ENCODE measurements at regions of chr1 and their contacts with region 1.

Region 1: DNA sequence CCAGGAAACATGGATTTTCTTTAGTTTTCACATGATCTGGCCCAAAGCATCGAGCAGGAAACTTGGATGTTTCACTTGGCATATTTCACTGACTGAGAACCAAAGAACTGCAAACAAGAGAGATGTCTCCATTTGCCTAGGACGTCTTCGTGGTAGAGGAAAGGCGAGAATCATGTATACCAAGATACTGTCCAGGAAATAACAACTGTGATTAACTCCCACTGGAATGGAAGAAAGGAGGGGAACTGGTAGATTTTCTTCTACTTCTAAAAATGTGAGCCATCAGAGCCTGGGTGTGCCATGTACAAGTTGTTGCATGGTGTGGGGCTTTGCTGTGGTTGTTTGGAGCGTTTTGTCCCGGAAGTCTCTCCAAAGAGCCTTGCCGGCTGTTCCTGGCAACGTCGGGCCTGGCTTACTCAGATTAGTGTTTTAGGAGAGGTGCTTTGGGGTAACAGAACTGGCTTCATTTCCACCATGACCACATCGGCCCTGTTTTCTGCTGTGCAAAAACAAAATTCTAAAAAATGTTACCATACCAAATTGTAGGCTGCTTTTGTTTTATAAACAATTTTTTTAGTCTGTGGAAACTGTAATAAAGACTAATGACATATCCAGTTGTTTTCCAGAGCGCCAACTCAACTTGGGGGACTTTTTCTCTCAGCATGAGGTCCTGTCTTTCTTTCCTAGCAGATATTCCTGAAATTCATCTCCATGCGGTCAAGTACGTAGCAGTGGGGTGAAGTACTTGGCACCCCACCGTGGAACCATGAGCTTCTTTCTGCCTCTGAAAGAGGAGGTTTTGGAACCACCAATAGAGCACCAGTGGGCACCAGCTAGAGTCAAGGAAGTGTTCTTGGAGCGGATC is 118.3 kb downstream of the TM2D1 start:
- DNase-seq: peak; percentile 76 to 95
- H3K4me3 ChIP-seq: peak overlapping the region in 1 of 2 donors; percentile 51
- H3K27ac ChIP-seq: peak overlapping the region; percentile 91 to 94
- H3K4me1 ChIP-seq: peaks cover 4 to 19% of the 10 kb centered on the region in 2 donors
- H3K27me3 ChIP-seq: no peaks in the 10 kb centered on the region
- CTCF ChIP-seq: no peak

Region 2: DNA sequence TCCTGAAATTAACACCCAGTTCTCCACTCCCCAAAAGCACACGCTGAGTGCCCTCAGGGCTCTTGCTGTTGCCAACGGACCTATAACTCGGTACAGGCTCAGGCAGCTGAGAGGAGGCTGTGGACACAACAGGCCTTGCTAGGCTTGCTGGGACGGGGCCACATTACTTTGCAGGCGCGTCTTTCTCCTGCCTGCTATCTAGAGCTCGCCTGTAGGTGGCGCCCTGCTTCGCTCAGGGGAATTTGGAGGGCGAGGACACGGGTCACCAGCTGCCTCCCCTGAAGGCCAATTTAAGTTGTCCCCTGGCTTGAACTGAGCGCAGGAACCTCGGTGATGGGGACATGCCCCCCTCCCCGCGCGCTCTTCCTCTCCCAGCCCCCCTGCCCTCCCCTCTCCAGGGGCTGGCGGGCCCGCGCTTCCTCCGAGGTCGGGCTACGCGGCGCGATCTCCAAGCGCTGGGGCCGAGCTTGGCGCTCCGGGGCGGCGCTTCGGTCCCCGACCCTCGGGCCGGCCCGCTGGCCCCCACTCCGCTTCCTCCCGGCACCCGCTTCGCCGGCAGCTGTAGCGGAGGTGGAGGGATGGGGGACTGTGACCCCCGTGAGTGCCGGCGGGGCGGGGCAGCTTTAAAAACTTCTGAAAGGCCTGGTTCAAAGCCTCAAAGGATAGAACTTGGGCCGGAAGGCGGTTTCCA is 556.7 kb before region 1 on chr1:
- intact Hi-C with region 1: loop called (anchors 5 kb)
- DNase-seq: peak; percentile 66 to 97
- H3K4me3 ChIP-seq: peak overlapping the region; percentile 72 to 97
- H3K27ac ChIP-seq: peak overlapping the region; percentile 97 to 98
- H3K4me1 ChIP-seq: peaks cover 6 to 21% of the 10 kb centered on the region in 2 donors
- H3K27me3 ChIP-seq: no peaks in the 10 kb centered on the region
- CTCF ChIP-seq: peak; percentile 90 to 98 (median 97)

Region 3: GRCh38 chr1:61337981-61338848 is 268.5 kb before region 1 on chr1:
- intact Hi-C with region 1: loop called (anchors 10 kb)
- DNase-seq: peak; percentile 38 to 92
- H3K4me3 ChIP-seq: peak overlapping the region; percentile 27 to 54
- H3K27ac ChIP-seq: peak overlapping the region; percentile 86 to 88
- H3K4me1 ChIP-seq: peaks cover 3 to 45% of the 10 kb centered on the region in 2 donors
- H3K27me3 ChIP-seq: no peaks in the 10 kb centered on the region
- CTCF ChIP-seq: peak; percentile 71 to 80 (median 75)

Region 4: GRCh38 chr1:61472876-61473275 is 133.8 kb before region 1 on chr1:
- intact Hi-C with region 1: loop called (anchors 5 kb)
- DNase-seq: no peak
- H3K4me3 ChIP-seq: no peak overlapping the region
- H3K27ac ChIP-seq: no peak overlapping the region
- H3K4me1 ChIP-seq: peaks cover 0 to 9% of the 10 kb centered on the region in 2 donors
- H3K27me3 ChIP-seq: no peaks in the 10 kb centered on the region
- CTCF ChIP-seq: no peak

Region 5: DNA sequence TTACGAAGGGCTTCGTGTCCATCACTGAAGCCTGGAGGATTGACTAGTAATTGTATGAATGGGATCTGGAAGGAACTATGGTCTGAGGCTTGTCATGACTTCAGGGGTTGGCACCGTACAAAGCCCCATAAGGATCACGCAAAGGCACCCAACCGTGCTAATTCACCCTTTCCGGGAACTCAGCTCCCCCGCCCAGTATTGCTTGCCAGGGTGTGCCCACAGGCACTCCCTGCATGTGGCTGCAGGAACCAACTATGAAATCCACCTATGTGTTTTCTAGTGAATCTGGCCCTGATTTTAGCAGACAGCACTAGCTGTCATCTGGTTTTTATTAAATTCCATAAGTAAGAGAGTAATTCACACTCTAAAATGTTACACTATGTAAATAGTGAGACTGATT is 21.0 kb before region 1 on chr1:
- intact Hi-C with region 1: no loop called
- DNase-seq: no peak
- H3K4me3 ChIP-seq: no peak overlapping the region
- H3K27ac ChIP-seq: no peak overlapping the region
- H3K4me1 ChIP-seq: no peaks in the 10 kb centered on the region
- H3K27me3 ChIP-seq: no peaks in the 10 kb centered on the region
- CTCF ChIP-seq: no peak

Region 6: DNA sequence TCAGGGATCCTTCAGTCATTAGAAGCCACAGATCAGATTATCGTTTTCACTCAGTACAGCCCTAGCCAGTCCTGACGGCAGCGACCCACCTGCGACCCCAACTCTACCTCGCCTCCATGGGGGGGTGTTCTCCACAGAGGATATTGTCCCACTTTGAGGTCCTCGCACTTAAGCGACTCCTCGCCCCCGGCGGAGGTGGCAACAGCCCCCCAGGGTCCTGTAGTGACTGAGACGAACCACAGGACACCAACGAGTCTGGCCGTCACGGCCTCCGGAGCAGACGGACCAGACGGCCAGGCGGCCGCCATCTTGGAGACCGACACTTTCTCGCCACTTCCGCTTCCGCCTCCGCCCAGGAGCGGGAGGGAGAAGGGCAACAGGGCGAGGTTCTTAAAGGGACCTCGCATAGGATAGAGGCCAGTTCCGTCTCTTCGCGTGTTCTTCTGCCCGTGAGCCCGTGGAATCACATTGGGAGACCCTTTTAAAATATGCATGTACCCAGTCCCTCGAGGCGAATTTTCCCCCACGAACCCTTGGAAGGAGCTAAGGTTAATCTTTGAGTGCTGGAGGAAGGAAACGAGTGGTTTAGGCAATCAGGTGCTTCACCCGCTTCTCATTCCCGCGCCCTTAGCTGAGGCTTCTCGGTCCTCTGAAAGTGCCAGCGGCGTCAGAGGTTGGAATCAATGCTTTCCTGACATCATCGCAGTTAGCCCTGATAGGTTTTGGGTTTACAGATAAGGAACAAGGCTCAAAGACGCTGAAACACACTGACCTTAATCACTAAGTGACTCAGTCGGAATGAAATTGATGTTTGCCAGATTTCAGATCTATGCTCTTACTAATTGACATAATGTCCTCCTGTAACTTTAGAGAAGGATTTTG is 118.4 kb after region 1 on chr1 and contains the start of gene TM2D1:
- intact Hi-C with region 1: loop called (anchors 10 kb)
- DNase-seq: peak; percentile 55 to 95
- H3K4me3 ChIP-seq: peak within 1 kb of the TSS; percentile 79 to 81
- H3K27ac ChIP-seq: peak within 1 kb of the TSS; percentile 89 to 96
- H3K4me1 ChIP-seq: peaks cover 6 to 12% of the 10 kb centered on the region in 2 donors
- H3K27me3 ChIP-seq: no peaks in the 10 kb centered on the region
- CTCF ChIP-seq: peak in 1 of 3 experiments; percentile 4
- total RNA-seq, gene TM2D1: 43.2 TPM